ENCODE measurements at regions of chr17 and their contacts with region 1.

Region 1: GRCh38 chr17:65627891-65628659 is 66.6 kb upstream of the AXIN2 start:
- DNase-seq: peak; percentile 57 to 58
- H3K4me3 ChIP-seq: no peak overlapping the region
- H3K4me3 Mint-ChIP-seq: peak overlapping the region; percentile 62
- H3K27ac Mint-ChIP-seq: peak overlapping the region; percentile 39
- H3K4me1 ChIP-seq: peaks cover 33% of the 10 kb centered on the region
- H3K4me1 Mint-ChIP-seq: peaks cover 36% of the 10 kb centered on the region
- H3K27me3 ChIP-seq: no peaks in the 10 kb centered on the region
- H3K27me3 Mint-ChIP-seq: no peaks in the 10 kb centered on the region
- CTCF ChIP-seq: no peak

Region 2: DNA sequence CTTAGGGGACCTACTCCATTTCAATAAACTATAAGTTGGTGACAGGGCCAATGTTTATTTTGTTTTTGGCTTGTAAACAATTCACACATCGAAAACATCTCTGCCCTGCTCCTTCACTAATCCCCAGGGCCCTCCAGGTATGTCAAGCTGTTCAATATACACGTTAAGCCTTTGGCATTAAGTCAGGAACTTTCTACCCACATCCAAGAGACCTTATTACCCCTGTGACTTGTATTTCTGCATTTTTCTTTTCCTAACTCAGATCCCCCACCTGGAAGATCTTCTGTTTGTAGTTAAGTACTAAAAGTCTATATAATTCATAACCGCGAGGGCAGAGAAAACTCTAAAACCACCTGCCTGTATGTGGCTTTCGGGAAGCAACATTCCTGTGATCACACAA is 40.1 kb after region 1 on chr17:
- CTCF ChIA-PET with region 1: no interaction called
- POLR2A ChIA-PET with region 1: no interaction called
- intact Hi-C with region 1: loop called (anchors 1 kb)
- DNase-seq: no peak
- H3K4me3 ChIP-seq: no peak overlapping the region
- H3K4me3 Mint-ChIP-seq: no peak overlapping the region
- H3K27ac Mint-ChIP-seq: no peak overlapping the region
- H3K4me1 ChIP-seq: peaks cover 9% of the 10 kb centered on the region; the same call in 1 of the 2 replicates
- H3K4me1 Mint-ChIP-seq: peaks cover 7% of the 10 kb centered on the region
- H3K27me3 ChIP-seq: no peaks in the 10 kb centered on the region
- H3K27me3 Mint-ChIP-seq: no peaks in the 10 kb centered on the region
- CTCF ChIP-seq: no peak

Measured in Caco-2 (cell line).